ENCODE measurements at regions of chr19 and their contacts with region 1.

Region 1: DNA sequence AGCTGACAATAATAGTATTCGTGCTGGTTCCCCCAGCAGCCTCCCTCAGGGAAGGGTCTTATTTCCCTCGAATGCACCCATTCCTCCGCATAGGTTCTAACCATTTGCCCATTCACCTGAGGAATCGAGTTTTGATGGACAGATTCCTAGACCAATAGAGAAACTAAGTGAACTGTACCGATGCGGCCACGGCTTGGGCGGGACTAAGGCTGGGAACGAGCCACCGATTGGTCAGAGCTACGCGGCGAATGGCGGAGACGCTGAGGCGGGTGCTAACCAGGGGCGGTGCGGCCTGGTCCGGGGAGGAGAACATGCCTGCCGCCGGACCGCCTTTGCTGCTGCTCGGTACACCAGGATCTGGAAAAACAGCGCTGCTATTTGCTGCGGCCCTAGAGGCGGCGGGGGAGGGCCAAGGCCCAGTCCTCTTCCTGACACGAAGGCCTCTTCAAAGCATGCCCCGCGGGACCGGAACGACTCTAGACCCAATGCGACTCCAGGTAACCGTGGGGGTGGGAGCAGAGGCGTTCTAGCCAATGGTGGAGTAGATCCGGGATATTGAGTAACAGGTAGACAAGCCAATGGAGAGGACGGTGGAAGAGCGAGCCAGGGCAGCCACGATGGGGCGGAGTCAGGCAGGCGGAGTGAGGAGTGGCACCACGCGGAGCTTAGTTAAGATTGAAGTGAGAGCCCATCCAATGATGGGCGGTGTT is at the start of gene SWSAP1:
- DNase-seq: peak; percentile 97 to 98
- H3K4me3 ChIP-seq: peak within 1 kb of the TSS; percentile 67 to 90 (median 71)
- H3K27ac ChIP-seq: peak within 1 kb of the TSS; percentile 91
- H3K4me1 ChIP-seq: peaks cover 0 to 10% (median 8%) of the 10 kb centered on the region in 4 experiments; a peak in 6 of 7 replicates
- H3K27me3 ChIP-seq: no peaks in the 10 kb centered on the region
- CTCF ChIP-seq: no peak
- EP300 ChIP-seq: no peak
- POLR2A ChIP-seq: peak in 1 of 2 experiments; percentile 98; a peak in 2 of 3 replicates
- RAD21 ChIP-seq: no peak
- total RNA-seq, gene SWSAP1: 3.1 and 3.2 TPM in 2 replicates

Region 2: DNA sequence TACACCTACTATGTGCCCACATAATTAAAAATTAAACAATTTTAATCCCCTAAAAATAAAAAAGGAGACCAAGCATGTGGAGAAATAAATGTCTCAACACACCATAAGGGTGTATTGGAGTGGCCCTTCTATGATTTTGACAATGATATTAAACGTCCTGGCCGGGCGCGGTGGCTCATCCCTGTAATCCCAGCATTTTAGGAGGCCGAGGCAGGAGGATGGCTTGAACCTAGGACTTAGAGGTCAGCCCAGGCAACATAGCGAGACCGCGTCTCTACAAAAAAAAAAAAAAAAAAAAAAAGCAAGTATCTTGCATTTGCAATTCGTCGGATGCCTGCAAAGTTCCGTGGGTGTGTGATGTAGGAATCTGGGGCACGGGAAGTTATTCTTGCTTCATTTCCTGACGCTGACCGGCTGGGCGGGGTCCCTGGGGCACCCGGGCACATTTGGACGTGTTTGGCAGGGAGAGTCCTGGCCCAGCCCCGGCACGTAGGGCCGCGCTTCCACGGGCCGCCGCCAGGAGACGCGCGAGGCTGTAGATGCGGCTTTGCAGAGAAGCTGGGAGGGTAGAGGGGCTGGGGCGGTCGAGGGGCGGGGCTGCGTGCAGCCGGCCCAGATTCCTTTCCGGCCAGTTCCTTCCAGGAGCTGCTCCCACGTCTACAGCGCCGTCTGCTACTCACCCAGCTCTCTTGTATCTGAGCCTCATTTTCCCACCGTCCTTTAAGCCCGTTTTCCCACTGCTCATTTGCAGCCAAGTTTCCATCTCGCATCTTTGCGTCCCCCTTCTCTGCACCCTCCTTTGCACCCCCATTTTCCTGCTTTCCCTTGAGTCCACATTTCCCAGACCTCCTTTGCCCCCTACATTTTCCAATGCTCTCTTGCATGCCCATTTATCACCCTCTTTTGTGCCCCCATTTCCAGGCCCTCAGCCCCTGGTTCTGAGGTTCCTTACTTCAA is 80.9 kb before region 1 on chr19:
- CTCF ChIA-PET with region 1: interaction called, 20 read pairs
- POLR2A ChIA-PET with region 1: interaction called, 4 read pairs
- DNase-seq: peak; percentile 88 to 100
- H3K4me3 ChIP-seq: peak overlapping the region in 2 of 4 experiments; percentile 21 to 44; a peak in 4 of 8 replicates
- H3K27ac ChIP-seq: no peak overlapping the region
- H3K4me1 ChIP-seq: peaks cover 2 to 6% (median 2%) of the 10 kb centered on the region in 4 experiments; a peak in 5 of 7 replicates
- H3K27me3 ChIP-seq: no peaks in the 10 kb centered on the region; a peak in 2 of 7 replicates
- CTCF ChIP-seq: peak; percentile 92 to 97 (median 93)
- EP300 ChIP-seq: no peak
- POLR2A ChIP-seq: no peak
- RAD21 ChIP-seq: peak; percentile 92 to 94

Region 3: DNA sequence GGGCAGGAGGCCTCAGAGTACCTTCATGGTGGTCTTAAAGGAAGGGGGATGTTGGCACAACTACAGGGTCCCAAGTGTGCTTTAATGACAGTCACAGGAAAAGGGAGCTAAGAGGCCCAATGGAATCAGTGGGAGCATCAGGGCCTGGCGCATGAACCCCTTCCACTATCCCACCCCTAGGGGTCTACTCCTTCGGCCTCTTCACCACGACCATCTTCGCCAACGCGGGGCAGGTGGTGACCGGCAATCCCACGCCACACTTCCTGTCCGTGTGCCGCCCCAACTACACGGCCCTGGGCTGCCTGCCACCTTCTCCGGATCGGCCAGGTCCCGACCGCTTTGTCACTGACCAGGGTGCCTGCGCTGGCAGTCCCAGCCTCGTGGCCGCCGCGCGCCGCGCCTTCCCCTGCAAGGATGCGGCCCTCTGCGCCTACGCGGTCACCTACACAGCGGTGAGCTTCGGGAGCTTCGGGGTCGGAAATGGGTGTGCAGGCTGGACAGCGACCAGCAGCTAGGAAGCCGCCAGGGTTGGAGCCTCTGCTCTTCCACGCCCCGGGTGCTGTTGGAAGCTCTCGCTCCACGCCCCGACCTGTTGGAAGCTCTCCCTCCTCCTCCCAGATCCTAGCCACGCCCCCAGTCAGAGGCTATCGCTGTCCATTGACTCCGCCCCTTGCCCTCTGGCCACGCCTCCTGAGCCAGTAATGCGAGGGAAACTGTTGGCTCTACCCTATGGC is 13.4 kb before region 1 on chr19:
- CTCF ChIA-PET with region 1: interaction called, 49 read pairs
- POLR2A ChIA-PET with region 1: interaction called, 34 read pairs
- DNase-seq: peak in 1 of 2 experiments; percentile 100
- H3K4me3 ChIP-seq: peak overlapping the region; percentile 46 to 62 (median 56)
- H3K27ac ChIP-seq: 0 out of 2 replicates have a peak overlapping the region, but pooled peaks have one; percentile 19
- H3K4me1 ChIP-seq: peaks cover 0 to 9% (median 5%) of the 10 kb centered on the region in 4 experiments
- H3K27me3 ChIP-seq: peaks cover 0 to 11% (median 5%) of the 10 kb centered on the region in 4 experiments; a peak in 3 of 7 replicates
- CTCF ChIP-seq: peak; percentile 19 to 44 (median 44); a peak in 3 of 4 replicates
- EP300 ChIP-seq: no peak
- POLR2A ChIP-seq: peak in 1 of 2 experiments; percentile 46; a peak in 1 of 3 replicates
- RAD21 ChIP-seq: no peak

Region 4: DNA sequence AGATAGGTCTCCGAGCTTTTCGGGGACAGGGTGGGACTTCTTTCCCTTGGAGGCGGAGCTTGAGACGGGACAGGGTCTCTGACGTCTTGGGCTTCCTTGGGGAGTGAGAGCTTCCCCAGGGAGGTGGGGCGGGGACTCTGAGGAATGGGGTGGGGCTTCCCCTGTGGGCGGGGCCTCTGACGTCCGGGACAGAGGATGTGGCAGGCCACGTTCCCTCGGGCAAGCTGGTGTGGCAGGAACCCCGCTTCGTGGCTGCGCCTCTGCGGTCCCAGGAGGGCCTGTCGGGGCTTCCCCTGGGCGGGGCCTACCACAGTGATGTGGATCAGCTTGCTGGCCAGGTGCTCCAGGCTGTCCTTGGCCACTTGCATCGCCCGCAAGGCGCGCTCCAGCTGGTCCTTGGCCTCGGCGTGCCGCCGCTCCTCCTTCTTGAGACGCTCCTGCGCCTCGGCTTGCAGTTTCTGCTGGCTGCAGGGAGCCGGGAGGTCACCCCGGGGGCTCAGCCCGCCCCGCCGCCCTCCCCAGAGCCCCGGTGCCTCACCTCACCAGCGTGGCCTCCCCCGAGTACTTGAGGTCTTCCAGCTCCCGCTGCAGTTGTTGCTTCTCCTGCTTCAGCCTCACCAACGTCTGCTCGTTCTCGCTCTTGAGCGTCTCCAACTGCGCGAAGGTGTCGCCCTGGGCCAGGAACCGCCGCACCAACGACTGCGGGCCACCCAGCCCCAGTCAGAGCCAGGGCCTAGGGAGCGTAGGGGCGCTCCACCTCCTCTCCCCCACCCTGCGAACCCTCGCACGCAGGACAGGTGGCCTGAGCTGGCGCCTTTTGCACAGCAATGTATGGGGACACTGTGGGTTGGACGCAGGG is 47.8 kb after region 1 on chr19:
- CTCF ChIA-PET with region 1: interaction called, 197 read pairs
- POLR2A ChIA-PET with region 1: interaction called, 29 read pairs
- DNase-seq: peak; percentile 88 to 99
- H3K4me3 ChIP-seq: peak overlapping the region; percentile 37 to 76 (median 53)
- H3K27ac ChIP-seq: no peak overlapping the region
- H3K4me1 ChIP-seq: peaks cover 0 to 14% (median 12%) of the 10 kb centered on the region in 4 experiments; a peak in 5 of 7 replicates
- H3K27me3 ChIP-seq: peaks cover 2 to 28% (median 21%) of the 10 kb centered on the region in 4 experiments
- CTCF ChIP-seq: no peak
- EP300 ChIP-seq: no peak
- POLR2A ChIP-seq: peak in 1 of 2 experiments; percentile 60; a peak in 2 of 3 replicates
- RAD21 ChIP-seq: no peak

Region 5: DNA sequence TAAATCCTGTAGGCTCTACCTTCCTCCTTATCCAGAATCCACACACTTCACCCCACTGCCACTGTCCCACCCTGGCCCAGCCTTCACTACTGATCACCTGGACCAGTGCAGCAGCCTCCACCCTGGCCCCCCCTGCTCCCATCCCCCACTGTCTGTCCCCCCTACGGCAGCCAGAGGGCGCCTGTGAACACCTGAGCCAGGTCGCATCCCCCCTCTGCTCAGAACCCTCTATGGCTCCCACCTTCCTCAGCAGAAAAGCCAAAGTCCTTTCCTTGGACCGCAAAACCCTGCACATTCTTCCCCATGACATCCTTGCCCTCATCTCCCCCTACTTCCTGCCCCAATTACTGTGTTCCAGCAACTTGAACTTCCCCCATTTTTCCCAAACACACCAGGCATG is 85.6 kb after region 1 on chr19:
- CTCF ChIA-PET with region 1: no interaction called
- POLR2A ChIA-PET with region 1: no interaction called
- DNase-seq: no peak
- H3K4me3 ChIP-seq: no peak overlapping the region
- H3K27ac ChIP-seq: no peak overlapping the region
- H3K4me1 ChIP-seq: peaks cover 3 to 12% (median 5%) of the 10 kb centered on the region in 4 experiments
- H3K27me3 ChIP-seq: no peaks in the 10 kb centered on the region
- CTCF ChIP-seq: peak; percentile 55 to 72 (median 57)
- EP300 ChIP-seq: no peak
- POLR2A ChIP-seq: no peak
- RAD21 ChIP-seq: peak in 1 of 2 experiments; percentile 37; a peak in 1 of 4 replicates

Region 6: DNA sequence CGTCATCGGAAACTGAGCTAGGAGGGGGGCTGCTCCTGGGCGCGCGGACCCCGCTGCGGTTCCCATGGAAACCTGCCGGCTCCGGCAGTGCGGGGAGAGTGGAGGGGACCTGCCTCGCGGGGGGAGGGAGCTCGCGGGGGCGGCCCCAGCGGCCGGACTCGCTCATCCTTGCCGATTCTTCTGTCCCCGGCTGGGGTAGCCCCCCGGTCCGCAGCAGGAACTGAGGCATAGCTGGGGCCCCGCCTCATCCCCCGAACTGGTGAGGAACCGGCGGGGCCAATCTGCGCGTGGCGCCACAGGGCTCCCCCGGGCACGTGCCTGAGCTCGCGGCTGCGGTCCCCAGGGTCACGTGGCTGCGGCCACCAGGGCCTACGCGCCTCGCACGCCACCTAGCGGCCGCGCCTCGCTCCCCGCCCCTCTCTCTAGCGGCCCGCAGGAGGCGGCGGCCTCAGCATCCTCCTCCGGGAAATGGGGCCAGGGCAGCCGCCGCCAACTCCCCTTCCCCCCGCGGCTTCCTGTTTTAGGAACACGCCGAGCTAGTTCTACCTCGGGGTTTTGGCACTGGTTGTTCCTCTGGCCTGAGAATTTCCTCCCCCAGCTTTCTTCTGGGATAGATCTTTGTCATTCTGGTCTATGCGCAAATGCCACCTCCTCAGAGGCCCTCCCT is 107.9 kb after region 1 on chr19:
- CTCF ChIA-PET with region 1: interaction called, 12 read pairs
- POLR2A ChIA-PET with region 1: interaction called, 7 read pairs
- DNase-seq: peak; percentile 53 to 95
- H3K4me3 ChIP-seq: peak overlapping the region; percentile 0 to 56 (median 9); a peak in 2 of 8 replicates
- H3K27ac ChIP-seq: no peak overlapping the region
- H3K4me1 ChIP-seq: peaks cover 0 to 17% (median 5%) of the 10 kb centered on the region in 4 experiments; a peak in 5 of 7 replicates
- H3K27me3 ChIP-seq: peaks cover 20 to 26% (median 23%) of the 10 kb centered on the region in 4 experiments
- CTCF ChIP-seq: peak; percentile 93 to 97 (median 96)
- EP300 ChIP-seq: peak in 1 of 2 experiments; percentile 53; a peak in 1 of 3 replicates
- POLR2A ChIP-seq: 0 out of 3 replicates have a peak, but pooled peaks of 1 of the 2 experiments have one; percentile 17
- RAD21 ChIP-seq: peak; percentile 86 to 87

Measured in H1 (cell line).